ENCODE measurements at regions of chr16 and their contacts with region 1.

Region 1: DNA sequence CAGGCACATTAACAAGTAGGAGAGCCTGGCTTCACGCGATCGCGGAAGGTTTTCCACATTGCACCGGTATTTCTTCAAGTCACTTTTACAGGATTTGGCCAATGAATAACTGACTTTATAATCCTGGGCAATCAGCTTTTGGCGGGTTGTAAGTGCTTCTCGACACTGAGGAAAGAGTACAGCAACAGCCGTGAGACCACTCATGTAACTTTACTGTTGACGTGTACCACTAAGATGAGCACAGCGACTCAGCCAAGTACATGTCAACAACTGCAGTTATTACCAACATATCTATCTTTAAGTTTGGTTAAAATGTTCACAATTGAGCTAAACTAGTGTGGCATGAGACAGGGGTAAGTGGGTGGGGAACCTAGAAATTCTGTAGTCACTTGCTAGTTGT is 71.7 kb upstream of the CLEC18B start:
- DNase-seq: no peak
- ATAC-seq: peak; percentile 87

Region 2: GRCh38 chr16:74309789-74310781 is 182.9 kb before region 1 on chr16:
- intact Hi-C with region 1: no loop called
- DNase-seq: no peak
- ATAC-seq: peak; percentile 48

Region 3: DNA sequence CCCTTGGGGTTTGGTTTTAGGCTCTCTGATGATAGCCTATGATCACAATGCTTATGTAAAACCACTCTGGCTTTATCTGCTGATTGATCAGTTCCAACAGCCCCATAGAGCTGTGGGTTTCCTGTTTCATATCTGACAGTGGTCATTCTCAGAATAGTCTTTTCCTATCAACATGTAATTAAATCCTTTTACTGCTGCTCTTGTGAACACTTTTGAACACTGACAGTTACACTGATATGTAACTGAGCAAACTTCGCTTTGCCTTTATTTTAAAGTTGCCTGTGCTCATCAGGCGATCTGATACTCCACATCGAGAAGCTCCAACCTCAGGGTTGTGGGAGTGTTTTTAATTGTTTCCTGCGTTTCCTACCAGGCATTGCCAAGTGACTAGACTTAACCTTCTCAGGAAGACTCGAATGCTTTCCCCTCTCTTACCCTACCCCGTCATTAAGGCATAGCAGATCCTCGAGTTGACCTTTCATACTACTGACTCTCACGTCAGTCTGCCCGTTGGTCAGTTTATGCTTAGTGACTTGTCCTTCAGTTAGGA is 54.4 kb before region 1 on chr16:
- intact Hi-C with region 1: no loop called
- DNase-seq: no peak
- ATAC-seq: no peak

Region 4: GRCh38 chr16:74606521-74607310 is 113.7 kb after region 1 on chr16 and contains the start of gene GLG1:
- intact Hi-C with region 1: loop called (anchors 10 kb)
- DNase-seq: peak; percentile 96
- ATAC-seq: peak; percentile 99
- total RNA-seq, gene GLG1: 62.4 TPM